Ovary (tissue), 10 donors: ENCODE measurements at regions of chr18 and their contacts with region 1.

Region 1: DNA sequence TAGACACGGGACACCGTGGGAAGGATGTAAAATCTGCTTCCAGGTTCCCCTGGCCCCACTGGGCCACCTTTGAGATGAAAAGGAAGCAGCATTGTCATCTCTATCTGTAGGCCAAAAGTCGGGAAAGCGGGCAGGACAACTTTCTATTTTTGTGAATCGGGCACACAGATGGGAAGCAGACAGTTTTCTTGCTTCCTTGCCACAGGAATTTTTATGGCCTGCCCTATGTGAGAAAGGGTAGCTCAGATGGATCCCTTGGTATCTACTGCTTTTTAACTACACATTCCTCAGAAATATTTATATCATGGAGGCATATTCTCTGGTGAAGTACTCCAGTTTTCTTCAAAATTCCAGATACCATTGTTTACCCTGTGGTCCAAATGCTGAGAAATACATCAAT is 735.5 kb downstream of the CBLN2 start:
- DNase-seq: no peak
- H3K4me3 ChIP-seq: no peak overlapping the region
- H3K27ac ChIP-seq: no peak overlapping the region
- H3K4me1 ChIP-seq: no peaks in the 10 kb centered on the region
- H3K27me3 ChIP-seq: no peaks in the 10 kb centered on the region
- CTCF ChIP-seq: no peak
- EP300 ChIP-seq: no peak
- POLR2A ChIP-seq: no peak

Region 2: DNA sequence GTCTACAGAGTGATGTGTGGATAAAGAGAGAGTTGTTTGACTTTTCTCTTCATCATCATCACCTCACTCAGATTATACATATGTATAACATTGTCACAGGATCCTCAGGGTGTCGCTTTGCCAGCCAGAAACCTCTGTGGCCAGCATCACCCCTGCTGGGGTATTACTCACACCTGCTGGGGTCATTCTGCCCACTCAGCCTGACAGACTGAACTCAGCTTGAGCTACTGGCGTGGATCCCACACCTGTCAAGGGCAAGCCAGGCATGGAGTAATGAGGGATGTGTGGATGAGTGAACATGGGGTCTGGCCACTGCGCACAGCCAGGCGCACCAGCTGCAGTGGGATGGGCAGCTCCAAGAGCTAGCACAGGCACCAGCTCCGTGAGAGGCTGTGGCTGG is 135.1 kb before region 1 on chr18:
- intact Hi-C with region 1: no loop called
- DNase-seq: no peak
- H3K4me3 ChIP-seq: no peak overlapping the region
- H3K27ac ChIP-seq: no peak overlapping the region
- H3K4me1 ChIP-seq: no peaks in the 10 kb centered on the region
- H3K27me3 ChIP-seq: no peaks in the 10 kb centered on the region
- CTCF ChIP-seq: no peak
- EP300 ChIP-seq: no peak
- POLR2A ChIP-seq: no peak

Region 3: DNA sequence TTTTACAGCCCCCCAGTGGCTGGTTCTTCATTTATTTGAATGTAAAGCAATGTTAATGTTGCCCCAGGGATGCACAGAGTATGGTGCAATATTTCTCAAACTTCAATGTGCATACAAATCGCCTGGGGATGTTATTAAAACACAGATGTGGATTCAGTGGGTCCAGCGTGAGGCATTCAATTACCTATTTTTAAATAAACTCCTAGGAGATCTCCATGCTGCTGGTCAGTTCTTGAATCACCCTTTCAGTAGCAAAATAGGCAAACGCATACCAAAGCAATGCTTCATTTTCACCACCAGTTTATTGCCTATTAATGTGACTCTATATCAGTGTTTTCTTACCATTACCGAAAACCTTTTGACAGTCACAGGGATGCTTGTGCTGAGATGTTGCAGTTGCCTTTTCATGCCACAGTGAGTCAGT is 204.8 kb after region 1 on chr18:
- intact Hi-C with region 1: loop called in 1 of 4 experiments (anchors 10 kb)
- DNase-seq: no peak
- H3K4me3 ChIP-seq: no peak overlapping the region
- H3K27ac ChIP-seq: no peak overlapping the region
- H3K4me1 ChIP-seq: no peaks in the 10 kb centered on the region
- H3K27me3 ChIP-seq: no peaks in the 10 kb centered on the region
- CTCF ChIP-seq: no peak
- EP300 ChIP-seq: no peak
- POLR2A ChIP-seq: no peak